ENCODE measurements at regions of chr10 and their contacts with region 1.

Region 1: DNA sequence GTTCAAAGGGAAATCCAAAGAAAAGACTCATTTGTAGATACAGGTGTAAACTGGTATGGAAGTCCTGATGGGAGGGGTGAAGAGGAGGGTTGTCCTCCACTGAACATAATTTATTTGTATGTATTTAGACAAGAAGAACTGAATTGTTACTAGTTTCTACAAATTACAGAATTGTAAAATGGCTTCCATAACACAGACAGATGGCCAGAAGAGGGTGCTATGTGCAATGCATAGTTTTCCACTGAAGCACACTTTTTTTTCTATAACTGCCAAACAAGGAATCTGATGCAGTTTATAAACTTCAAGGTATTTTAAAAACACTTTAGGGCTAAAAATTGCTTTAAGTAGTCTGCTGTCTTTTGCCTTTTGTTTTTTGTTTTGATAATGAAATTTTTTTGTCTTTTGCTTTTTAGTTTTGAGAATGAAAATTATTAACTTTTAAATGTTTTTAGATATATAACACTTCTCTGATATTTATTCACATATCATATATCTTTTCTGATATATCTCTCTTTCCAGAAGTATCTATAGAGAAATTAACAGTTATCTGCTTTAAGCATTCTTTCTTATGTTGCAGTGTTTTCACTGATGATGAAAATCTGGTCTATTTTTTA is 58.5 kb downstream of the PHYHIPL start:
- DNase-seq: peak in 1 of 2 donors; percentile 37
- ATAC-seq: peak; percentile 40

Region 2: GRCh38 chr10:59090817-59091622 is 143.9 kb before region 1 on chr10:
- intact Hi-C with region 1: no loop called
- DNase-seq: no peak
- ATAC-seq: no peak

Region 3: GRCh38 chr10:59155556-59155955 is 79.4 kb before region 1 on chr10:
- intact Hi-C with region 1: no loop called
- DNase-seq: no peak
- ATAC-seq: no peak

Region 4: DNA sequence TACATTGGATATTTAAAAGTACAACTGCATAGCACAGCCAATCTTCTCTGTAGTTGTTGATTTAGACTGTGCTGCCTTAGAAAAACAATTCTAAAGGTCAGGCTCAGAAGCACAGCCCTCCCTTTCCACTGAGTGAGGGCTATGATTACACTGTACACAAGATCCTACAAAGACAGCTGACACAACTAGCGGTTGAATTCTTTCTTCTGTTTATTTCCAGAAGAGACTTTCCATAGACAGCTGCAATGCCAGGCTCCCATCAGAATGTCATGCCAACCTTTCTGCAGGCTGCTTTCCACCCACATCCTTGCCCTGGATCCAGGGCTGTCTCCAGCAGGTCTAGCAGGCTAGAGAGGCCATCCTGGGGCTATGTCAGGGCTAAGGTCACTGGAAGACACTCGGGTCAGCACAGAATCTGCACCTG is 88.1 kb after region 1 on chr10:
- intact Hi-C with region 1: no loop called
- DNase-seq: peak in 1 of 2 donors; percentile 12
- ATAC-seq: peak; percentile 95

Region 5: GRCh38 chr10:59580026-59580863 is 345.3 kb after region 1 on chr10:
- intact Hi-C with region 1: loop called in 1 of 2 experiments (anchors 5 kb)
- DNase-seq: no peak
- ATAC-seq: peak; percentile 54

Measured in left colon (tissue), 2 donors.